ENCODE measurements at regions of chr12 and their contacts with region 1.

Region 1: DNA sequence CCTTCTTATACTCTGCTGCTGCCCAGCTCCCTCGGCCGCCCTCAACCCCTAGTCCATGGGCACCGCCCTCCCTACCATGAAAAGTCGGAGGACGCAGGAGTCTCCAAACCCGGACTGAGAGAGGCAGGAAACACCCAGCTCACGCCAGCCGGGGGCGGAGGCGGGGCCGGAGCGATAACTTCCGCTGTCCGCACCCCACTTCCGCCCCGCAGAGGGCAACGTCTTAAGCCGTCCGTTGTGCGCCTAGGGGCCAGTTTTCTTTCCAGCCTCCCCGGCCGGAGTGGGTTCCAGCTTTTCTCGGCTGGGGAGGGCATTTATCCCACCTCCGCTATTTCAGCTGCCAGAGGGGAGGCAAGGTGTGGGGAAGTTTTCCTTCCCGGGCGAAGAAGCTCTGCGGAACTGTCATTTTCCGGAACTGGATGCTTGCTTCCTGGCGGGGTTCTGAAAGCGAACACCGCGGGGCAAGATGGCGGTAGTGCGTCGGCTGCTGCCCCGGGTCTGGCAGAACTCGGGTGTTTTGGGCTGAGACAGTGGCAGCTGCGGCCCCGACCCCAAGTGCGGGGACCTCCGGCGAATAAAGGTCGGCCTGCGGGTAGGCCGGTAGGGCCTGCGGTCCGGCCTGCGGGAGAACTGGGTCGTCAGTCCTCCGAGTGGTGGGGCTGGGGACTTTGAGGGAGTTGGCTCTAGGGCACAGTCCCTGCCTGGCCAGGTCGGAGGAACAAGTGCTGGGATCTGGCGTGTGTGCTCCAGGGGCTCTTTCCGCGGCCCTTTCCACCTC is at the starts of genes KCTD10 and UBE3B:
- DNase-seq: peak; percentile 72
- ATAC-seq: peak; percentile 96
- H3K4me3 ChIP-seq: peak within 1 kb of the TSS; percentile 95 to 98 (median 95)
- H3K27ac ChIP-seq: peak within 1 kb of the TSS; percentile 94
- H3K4me1 ChIP-seq: peaks cover 39% of the 10 kb centered on the region
- H3K27me3 ChIP-seq: no peaks in the 10 kb centered on the region; a peak in 1 of 5 replicates
- CTCF ChIP-seq: peak; percentile 12; the same call in 1 of the 2 replicates
- EP300 ChIP-seq: no peak
- POLR2A ChIP-seq: peak; percentile 67 to 71
- RAD21 ChIP-seq: no peak
- total RNA-seq, gene KCTD10: 6.9 and 12.5 TPM in 2 replicates
- total RNA-seq, gene UBE3B: 25.3 and 31.5 TPM in 2 replicates

Region 2: GRCh38 chr12:109428037-109428629 is 49.2 kb before region 1 on chr12:
- CTCF ChIA-PET with region 1: no interaction called
- POLR2A ChIA-PET with region 1: interaction called, 3 read pairs
- in situ Hi-C with region 1: no loop called
- intact Hi-C with region 1: loop called (anchors 2 kb)
- DNase-seq: peak; percentile 62
- ATAC-seq: peak; percentile 84
- H3K4me3 ChIP-seq: no peak overlapping the region
- H3K27ac ChIP-seq: no peak overlapping the region
- H3K4me1 ChIP-seq: peaks cover 15% of the 10 kb centered on the region
- H3K27me3 ChIP-seq: no peaks in the 10 kb centered on the region; a peak in 1 of 5 replicates
- CTCF ChIP-seq: peak; percentile 90
- EP300 ChIP-seq: no peak
- POLR2A ChIP-seq: no peak
- RAD21 ChIP-seq: peak; percentile 61

Region 3: DNA sequence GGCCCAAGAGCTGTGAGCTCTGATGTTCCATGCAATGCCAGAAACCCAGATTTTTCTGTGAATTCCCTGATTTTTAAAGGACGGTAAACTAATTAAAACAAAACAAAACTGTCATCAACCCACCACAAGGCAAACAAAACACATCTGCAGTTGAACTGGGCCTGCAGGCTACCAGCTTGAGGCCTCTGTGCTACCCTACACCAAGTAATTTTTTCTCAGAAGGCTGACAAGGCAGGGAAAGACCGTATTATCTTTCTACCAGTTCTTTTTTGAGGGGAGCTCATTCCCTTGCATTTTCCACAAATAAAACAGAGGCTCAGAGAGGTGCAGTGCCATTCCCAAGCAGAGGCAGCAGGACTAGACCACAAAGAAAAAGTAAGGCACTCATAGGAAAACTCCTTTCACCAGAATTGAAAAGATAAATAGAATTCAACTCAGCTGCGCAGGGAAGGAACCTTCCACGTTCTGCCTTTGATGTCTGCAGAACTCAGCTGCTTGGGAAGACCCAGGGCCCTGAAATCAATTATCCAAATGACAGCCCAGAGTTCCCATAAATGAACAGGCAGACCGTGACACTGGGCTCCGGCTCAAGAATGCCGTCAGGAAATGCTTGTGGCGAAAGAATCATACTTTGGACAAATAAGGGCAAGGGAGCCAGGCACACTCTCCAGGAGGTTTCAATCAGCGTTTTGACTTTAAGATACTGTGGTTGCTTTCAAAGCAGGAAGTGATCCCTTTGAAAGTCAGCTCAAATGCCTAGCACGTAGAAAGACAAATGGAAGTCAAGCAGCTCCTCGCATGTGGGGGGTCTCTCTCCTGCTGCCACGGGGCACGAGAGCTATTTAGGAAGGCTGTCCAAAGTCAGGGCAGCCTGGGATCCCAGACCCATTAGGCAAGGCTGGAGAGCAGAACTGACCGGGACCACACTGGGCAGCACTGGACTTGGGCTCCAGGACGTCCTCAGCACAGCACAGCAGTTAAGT is 14.4 kb before region 1 on chr12:
- CTCF ChIA-PET with region 1: no interaction called
- POLR2A ChIA-PET with region 1: interaction called, 16 read pairs
- in situ Hi-C with region 1: no loop called
- intact Hi-C with region 1: no loop called
- DNase-seq: peak; percentile 63
- ATAC-seq: peak; percentile 47
- H3K4me3 ChIP-seq: no peak overlapping the region
- H3K27ac ChIP-seq: peak overlapping the region; percentile 38
- H3K4me1 ChIP-seq: peaks cover 39% of the 10 kb centered on the region
- H3K27me3 ChIP-seq: no peaks in the 10 kb centered on the region
- CTCF ChIP-seq: no peak
- EP300 ChIP-seq: no peak
- POLR2A ChIP-seq: no peak
- RAD21 ChIP-seq: no peak

Measured in HepG2 (cell line).